ENCODE measurements at regions of chr9 and their contacts with region 1.

Region 1: DNA sequence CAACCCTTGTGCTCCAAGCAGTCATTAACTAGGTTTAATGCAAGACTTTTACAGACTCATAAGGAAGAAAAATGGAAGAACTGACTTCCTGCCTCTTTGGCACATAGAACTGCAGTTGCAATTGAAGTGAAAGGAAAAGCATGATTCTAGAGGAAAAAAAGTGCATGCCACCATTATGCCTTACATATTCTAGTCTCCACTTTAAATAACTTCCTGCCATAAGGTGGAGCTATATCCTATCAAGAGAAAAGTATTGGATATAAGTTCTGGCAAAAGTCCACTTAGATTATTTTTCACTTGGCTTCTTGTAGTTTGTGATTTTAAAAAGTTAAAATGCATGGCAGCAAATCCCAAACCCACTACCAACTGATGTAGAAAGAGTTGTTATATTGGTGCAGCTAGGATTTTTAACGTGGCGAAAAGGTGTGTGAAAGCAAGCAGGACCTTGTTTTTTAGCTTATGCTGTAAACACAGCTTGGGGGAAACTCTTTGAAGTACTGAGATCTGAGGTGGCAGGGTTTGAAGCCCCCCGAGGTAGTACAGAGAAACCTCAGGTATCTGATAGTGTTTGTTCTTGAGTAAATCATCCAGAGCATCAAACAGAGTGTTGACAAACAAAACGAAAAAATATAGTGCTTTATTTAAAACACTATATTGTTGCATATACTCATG is 117.9 kb downstream of the ANXA1 start:
- DNase-seq: no peak
- ATAC-seq: peak; percentile 48
- H3K4me3 ChIP-seq: no peak overlapping the region
- H3K27ac ChIP-seq: no peak overlapping the region
- H3K4me1 ChIP-seq: no peaks in the 10 kb centered on the region
- H3K27me3 ChIP-seq: no peaks in the 10 kb centered on the region
- CTCF ChIP-seq: peak in 2 of 3 experiments; percentile 9 to 35; a peak in 2 of 6 replicates
- EP300 ChIP-seq: no peak
- POLR2A ChIP-seq: no peak
- RAD21 ChIP-seq: peak; percentile 13; the same call in 1 of the 2 replicates

Region 2: GRCh38 chr9:73116031-73116430 is 153.5 kb before region 1 on chr9:
- CTCF ChIA-PET with region 1: no interaction called
- POLR2A ChIA-PET with region 1: no interaction called
- RAD21 ChIA-PET with region 1: no interaction called
- SMC1A ChIA-PET with region 1: no interaction called
- in situ Hi-C with region 1: no loop called
- intact Hi-C with region 1: no loop called
- DNase-seq: no peak
- ATAC-seq: peak; percentile 48; the same call in 1 of the 3 replicates
- H3K4me3 ChIP-seq: no peak overlapping the region
- H3K27ac ChIP-seq: no peak overlapping the region
- H3K4me1 ChIP-seq: no peaks in the 10 kb centered on the region
- H3K27me3 ChIP-seq: no peaks in the 10 kb centered on the region
- CTCF ChIP-seq: no peak
- EP300 ChIP-seq: no peak
- POLR2A ChIP-seq: no peak
- RAD21 ChIP-seq: no peak

Region 3: DNA sequence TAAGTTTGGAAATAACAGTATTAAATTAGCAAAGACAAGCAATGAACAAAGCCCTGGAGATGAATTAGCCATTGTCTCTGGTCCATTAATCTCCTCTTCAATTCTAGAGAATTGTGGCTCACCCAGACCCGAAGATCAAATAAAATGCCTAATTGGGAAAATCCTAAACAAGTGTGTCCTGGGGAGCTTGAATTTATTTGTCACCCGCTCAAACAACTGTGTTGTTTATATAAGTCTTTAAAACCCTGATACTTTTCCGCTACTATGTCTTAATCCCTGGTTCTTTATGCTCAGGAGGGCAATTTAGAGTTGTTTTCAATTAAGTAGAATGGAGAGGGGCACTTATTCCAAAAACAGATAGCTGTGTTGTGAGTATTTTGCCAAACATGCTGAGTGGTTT is 10.5 kb after region 1 on chr9:
- CTCF ChIA-PET with region 1: interaction called, 4 read pairs
- POLR2A ChIA-PET with region 1: no interaction called
- RAD21 ChIA-PET with region 1: no interaction called
- SMC1A ChIA-PET with region 1: interaction called, 11 read pairs
- in situ Hi-C with region 1: no loop called
- intact Hi-C with region 1: no loop called
- DNase-seq: no peak
- ATAC-seq: no peak
- H3K4me3 ChIP-seq: no peak overlapping the region
- H3K27ac ChIP-seq: no peak overlapping the region
- H3K4me1 ChIP-seq: no peaks in the 10 kb centered on the region
- H3K27me3 ChIP-seq: no peaks in the 10 kb centered on the region
- CTCF ChIP-seq: no peak
- EP300 ChIP-seq: no peak
- POLR2A ChIP-seq: no peak
- RAD21 ChIP-seq: no peak

Region 4: GRCh38 chr9:73348471-73348870 is 78.9 kb after region 1 on chr9:
- CTCF ChIA-PET with region 1: no interaction called
- POLR2A ChIA-PET with region 1: no interaction called
- RAD21 ChIA-PET with region 1: no interaction called
- SMC1A ChIA-PET with region 1: no interaction called
- in situ Hi-C with region 1: no loop called
- intact Hi-C with region 1: no loop called
- DNase-seq: no peak
- ATAC-seq: no peak
- H3K4me3 ChIP-seq: no peak overlapping the region
- H3K27ac ChIP-seq: no peak overlapping the region
- H3K4me1 ChIP-seq: no peaks in the 10 kb centered on the region
- H3K27me3 ChIP-seq: no peaks in the 10 kb centered on the region
- CTCF ChIP-seq: no peak
- EP300 ChIP-seq: no peak
- POLR2A ChIP-seq: no peak
- RAD21 ChIP-seq: no peak

Region 5: GRCh38 chr9:73565833-73566465 is 296.4 kb after region 1 on chr9:
- CTCF ChIA-PET with region 1: interaction called, 27 read pairs
- POLR2A ChIA-PET with region 1: no interaction called
- RAD21 ChIA-PET with region 1: interaction called, 12 read pairs
- SMC1A ChIA-PET with region 1: interaction called, 5 read pairs
- in situ Hi-C with region 1: no loop called
- intact Hi-C with region 1: loop called (anchors 10 kb)
- DNase-seq: no peak
- ATAC-seq: peak; percentile 58
- H3K4me3 ChIP-seq: no peak overlapping the region
- H3K27ac ChIP-seq: no peak overlapping the region
- H3K4me1 ChIP-seq: no peaks in the 10 kb centered on the region
- H3K27me3 ChIP-seq: no peaks in the 10 kb centered on the region
- CTCF ChIP-seq: peak; percentile 40 to 66 (median 40); a peak in 5 of 6 replicates
- EP300 ChIP-seq: no peak
- POLR2A ChIP-seq: no peak
- RAD21 ChIP-seq: peak; percentile 57

Region 6: GRCh38 chr9:73761905-73762304 is 492.3 kb after region 1 on chr9:
- CTCF ChIA-PET with region 1: no interaction called
- POLR2A ChIA-PET with region 1: no interaction called
- RAD21 ChIA-PET with region 1: no interaction called
- SMC1A ChIA-PET with region 1: no interaction called
- in situ Hi-C with region 1: no loop called
- intact Hi-C with region 1: no loop called
- DNase-seq: no peak
- ATAC-seq: no peak
- H3K4me3 ChIP-seq: no peak overlapping the region
- H3K27ac ChIP-seq: no peak overlapping the region
- H3K4me1 ChIP-seq: no peaks in the 10 kb centered on the region
- H3K27me3 ChIP-seq: no peaks in the 10 kb centered on the region
- CTCF ChIP-seq: no peak
- EP300 ChIP-seq: no peak
- POLR2A ChIP-seq: no peak
- RAD21 ChIP-seq: no peak

Measured in GM12878 (cell line).